Ovary (tissue), 10 donors: ENCODE measurements at regions of chr19 and their contacts with region 1.

Region 1: GRCh38 chr19:2016041-2016807 is 710 bp upstream of the BTBD2 start:
- DNase-seq: peak; percentile 81 to 92 (median 88)
- H3K4me3 ChIP-seq: peak overlapping the region; percentile 21
- H3K27ac ChIP-seq: peak overlapping the region; percentile 60 to 79
- H3K4me1 ChIP-seq: peaks cover 8% of the 10 kb centered on the region
- H3K27me3 ChIP-seq: no peaks in the 10 kb centered on the region
- CTCF ChIP-seq: no peak
- EP300 ChIP-seq: no peak
- POLR2A ChIP-seq: no peak

Region 2: GRCh38 chr19:1935484-1936208 is 80.6 kb before region 1 on chr19:
- intact Hi-C with region 1: loop called in 1 of 4 experiments (anchors 5 kb)
- DNase-seq: no peak
- H3K4me3 ChIP-seq: no peak overlapping the region
- H3K27ac ChIP-seq: no peak overlapping the region
- H3K4me1 ChIP-seq: peaks cover 6% of the 10 kb centered on the region
- H3K27me3 ChIP-seq: no peaks in the 10 kb centered on the region
- CTCF ChIP-seq: no peak
- EP300 ChIP-seq: no peak
- POLR2A ChIP-seq: no peak

Region 3: GRCh38 chr19:1956868-1957492 is 59.2 kb before region 1 on chr19:
- intact Hi-C with region 1: loop called in 1 of 4 experiments (anchors 5 kb)
- DNase-seq: peak in 1 of 5 donors; percentile 46
- H3K4me3 ChIP-seq: no peak overlapping the region
- H3K27ac ChIP-seq: no peak overlapping the region
- H3K4me1 ChIP-seq: peaks cover 16% of the 10 kb centered on the region
- H3K27me3 ChIP-seq: no peaks in the 10 kb centered on the region
- CTCF ChIP-seq: no peak
- EP300 ChIP-seq: no peak
- POLR2A ChIP-seq: no peak

Region 4: GRCh38 chr19:2056182-2056836 is 40.1 kb after region 1 on chr19:
- intact Hi-C with region 1: loop called in 2 of 4 experiments (anchors 5 kb)
- DNase-seq: peak; percentile 79 to 88 (median 82)
- H3K4me3 ChIP-seq: peak overlapping the region; percentile 54
- H3K27ac ChIP-seq: peak overlapping the region; percentile 100
- H3K4me1 ChIP-seq: peaks cover 34% of the 10 kb centered on the region
- H3K27me3 ChIP-seq: no peaks in the 10 kb centered on the region
- CTCF ChIP-seq: no peak
- EP300 ChIP-seq: no peak
- POLR2A ChIP-seq: peak; percentile 74

Region 5: DNA sequence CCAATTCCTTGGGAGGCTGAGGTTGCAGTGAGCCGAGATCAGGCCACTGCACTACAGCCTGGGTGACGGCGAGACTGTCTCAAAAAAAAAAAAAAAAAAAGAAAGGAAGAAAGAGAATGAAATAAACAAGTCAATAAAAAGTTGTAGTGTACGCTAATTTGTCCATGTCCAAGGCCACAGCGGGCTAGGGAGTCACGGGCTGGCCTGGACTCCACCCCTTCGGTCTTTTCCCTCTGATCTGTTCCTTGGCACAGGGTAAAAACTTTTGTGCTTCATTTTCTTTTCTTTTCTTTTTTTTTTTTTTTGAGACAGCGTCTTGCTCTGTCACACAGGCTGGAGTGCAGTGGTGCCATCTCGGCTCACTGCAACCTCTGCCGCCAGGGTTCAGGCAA is 54.2 kb after region 1 on chr19:
- intact Hi-C with region 1: loop called in 3 of 4 experiments (anchors 2 to 5 kb)
- DNase-seq: peak in 4 of 5 donors; percentile 66 to 73 (median 68)
- H3K4me3 ChIP-seq: no peak overlapping the region
- H3K27ac ChIP-seq: peak overlapping the region in 1 of 2 donors; percentile 49
- H3K4me1 ChIP-seq: peaks cover 6% of the 10 kb centered on the region
- H3K27me3 ChIP-seq: no peaks in the 10 kb centered on the region
- CTCF ChIP-seq: no peak
- EP300 ChIP-seq: no peak
- POLR2A ChIP-seq: no peak

Region 6: DNA sequence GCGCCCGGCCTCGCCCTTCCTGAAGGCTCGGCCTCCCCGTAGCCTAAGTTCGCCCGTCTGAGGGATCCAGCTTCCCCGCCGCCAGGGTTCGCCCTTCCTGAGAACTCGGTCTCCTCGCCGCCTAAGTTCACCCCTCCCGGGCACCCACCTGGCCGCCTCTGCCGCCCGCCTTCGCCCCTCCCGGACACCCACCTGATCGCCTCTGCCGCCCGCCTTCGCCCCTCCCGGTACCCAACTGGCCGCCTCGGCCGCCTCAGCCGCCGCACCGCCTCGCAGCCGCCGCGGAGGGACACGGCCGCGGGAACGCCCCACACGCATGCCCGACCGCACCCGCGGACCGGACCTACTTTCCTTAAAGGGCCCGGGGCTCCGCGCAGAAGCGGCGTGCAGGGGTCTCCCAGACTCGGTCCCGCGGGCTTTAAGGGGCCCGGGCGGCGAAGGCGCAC is 79.8 kb after region 1 on chr19 and contains the start of gene MOB3A:
- intact Hi-C with region 1: no loop called
- DNase-seq: peak in 1 of 5 donors; percentile 92
- H3K4me3 ChIP-seq: peak within 1 kb of the TSS; percentile 96
- H3K27ac ChIP-seq: peak within 1 kb of the TSS; percentile 68 to 88
- H3K4me1 ChIP-seq: peaks cover 19% of the 10 kb centered on the region
- H3K27me3 ChIP-seq: no peaks in the 10 kb centered on the region
- CTCF ChIP-seq: peak in 2 of 3 donors; percentile 77 to 81
- EP300 ChIP-seq: no peak
- POLR2A ChIP-seq: peak; percentile 74
- total RNA-seq, gene MOB3A: 16.6 to 61.5 (median 47.8) TPM